ENCODE measurements at regions of chr1 and their contacts with region 1.

Region 1: DNA sequence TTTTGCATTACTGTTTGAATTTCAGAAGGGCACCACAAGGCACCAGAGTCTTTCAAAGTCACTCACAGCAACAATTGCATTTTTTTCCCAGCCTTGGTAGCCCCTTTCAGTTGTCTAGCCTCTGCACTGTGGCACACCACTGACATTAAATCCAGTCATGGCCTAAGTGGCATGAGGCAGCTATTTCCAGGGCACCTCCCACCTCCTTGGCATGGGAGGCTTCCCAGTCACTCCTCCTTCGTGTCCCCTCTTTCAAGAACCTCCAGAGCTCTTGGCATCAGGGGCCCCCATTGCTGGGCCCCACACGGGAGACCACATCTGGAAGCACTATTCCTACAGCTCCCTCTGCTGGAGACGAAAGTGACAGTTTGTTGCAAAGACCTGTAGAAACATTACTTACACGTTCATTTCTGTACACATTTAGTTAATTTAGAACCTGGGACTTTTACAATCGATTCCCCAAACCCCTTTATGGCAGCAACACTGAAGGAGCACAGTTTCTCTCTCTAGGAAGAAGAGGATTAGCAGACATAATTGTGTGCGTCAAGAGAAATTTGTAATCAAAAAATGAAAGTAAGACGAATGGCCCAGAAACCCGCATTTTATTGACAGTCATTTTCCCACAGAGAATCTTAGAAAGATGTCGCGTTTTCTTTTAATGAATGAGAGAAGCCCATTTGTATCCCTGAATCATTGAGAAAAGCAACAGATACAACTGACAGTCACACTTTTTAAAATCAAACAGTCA is 5.7 kb upstream of the CHD5 start:
- DNase-seq: peak; percentile 61
- H3K4me3 ChIP-seq: no peak overlapping the region
- H3K27ac ChIP-seq: no peak overlapping the region
- H3K4me1 ChIP-seq: peaks cover 4% of the 10 kb centered on the region in 2 experiments; a peak in 2 of 4 replicates
- H3K27me3 ChIP-seq: no peaks in the 10 kb centered on the region
- CTCF ChIP-seq: peak; percentile 65
- EP300 ChIP-seq: no peak
- RAD21 ChIP-seq: peak; percentile 64

Region 2: GRCh38 chr1:6108937-6109614 is 76.7 kb before region 1 on chr1:
- CTCF ChIA-PET with region 1: interaction called, 22 read pairs
- POLR2A ChIA-PET with region 1: no interaction called
- DNase-seq: peak; percentile 83
- H3K4me3 ChIP-seq: no peak overlapping the region
- H3K27ac ChIP-seq: no peak overlapping the region
- H3K4me1 ChIP-seq: peaks cover 0 to 11% of the 10 kb centered on the region in 2 experiments; a peak in 1 of 4 replicates
- H3K27me3 ChIP-seq: no peaks in the 10 kb centered on the region
- CTCF ChIP-seq: peak; percentile 31
- EP300 ChIP-seq: no peak
- RAD21 ChIP-seq: peak; percentile 77

Region 3: DNA sequence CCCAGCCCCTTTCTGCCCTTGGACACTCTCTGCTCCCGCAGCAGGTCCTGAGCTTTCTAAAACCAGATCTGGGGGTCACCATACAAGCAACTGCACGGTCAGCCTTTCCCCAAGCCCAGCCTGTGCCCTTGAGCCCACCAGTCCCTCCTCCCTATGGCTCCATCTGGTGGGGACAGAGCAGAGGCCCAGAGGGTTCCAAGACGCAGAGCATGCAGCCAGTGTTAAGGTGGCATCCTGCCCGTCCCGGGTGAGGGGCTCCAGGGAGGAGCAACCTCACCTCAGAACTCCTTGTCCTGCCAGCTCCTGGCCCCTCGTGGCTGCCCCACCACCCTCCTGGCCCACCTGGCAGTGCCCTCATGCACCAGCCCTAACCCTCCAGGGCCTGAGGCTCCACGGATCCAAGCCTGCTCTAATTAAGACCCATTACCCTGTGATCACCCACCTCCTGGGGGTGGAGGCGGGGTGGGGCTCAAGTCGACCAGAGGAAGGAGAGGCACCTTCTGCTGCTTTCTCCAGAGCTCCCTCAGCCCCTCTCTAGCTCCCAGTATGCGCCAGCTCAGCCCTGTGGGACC is 14.2 kb before region 1 on chr1:
- CTCF ChIA-PET with region 1: interaction called, 12 read pairs
- POLR2A ChIA-PET with region 1: no interaction called
- DNase-seq: peak; percentile 87
- H3K4me3 ChIP-seq: no peak overlapping the region
- H3K27ac ChIP-seq: no peak overlapping the region; a peak in 1 of 4 replicates
- H3K4me1 ChIP-seq: peaks cover 0 to 16% of the 10 kb centered on the region in 2 experiments; a peak in 1 of 4 replicates
- H3K27me3 ChIP-seq: no peaks in the 10 kb centered on the region
- CTCF ChIP-seq: peak; percentile 36
- EP300 ChIP-seq: no peak
- RAD21 ChIP-seq: peak; percentile 64

Region 4: GRCh38 chr1:6199298-6200187 is 13.7 kb after region 1 on chr1 and contains the start of gene RPL22:
- CTCF ChIA-PET with region 1: interaction called, 52 read pairs
- POLR2A ChIA-PET with region 1: interaction called, 5 read pairs
- DNase-seq: peak; percentile 94
- H3K4me3 ChIP-seq: peak within 1 kb of the TSS; percentile 84 to 87
- H3K27ac ChIP-seq: peak within 1 kb of the TSS; percentile 74 to 91
- H3K4me1 ChIP-seq: peaks cover 8 to 17% of the 10 kb centered on the region in 2 experiments; a peak in 3 of 4 replicates
- H3K27me3 ChIP-seq: no peaks in the 10 kb centered on the region
- CTCF ChIP-seq: no peak
- EP300 ChIP-seq: 0 out of 4 replicates have a peak, but pooled peaks of 1 of the 2 experiments have one; percentile 18
- RAD21 ChIP-seq: no peak
- polyA plus RNA-seq, gene RPL22: 140 and 151 TPM in 2 replicates

Measured in SK-N-SH (cell line).